Left ventricle myocardium superior (tissue), 1 donor: ENCODE measurements at regions of chr9 and their contacts with region 1.

Region 1: DNA sequence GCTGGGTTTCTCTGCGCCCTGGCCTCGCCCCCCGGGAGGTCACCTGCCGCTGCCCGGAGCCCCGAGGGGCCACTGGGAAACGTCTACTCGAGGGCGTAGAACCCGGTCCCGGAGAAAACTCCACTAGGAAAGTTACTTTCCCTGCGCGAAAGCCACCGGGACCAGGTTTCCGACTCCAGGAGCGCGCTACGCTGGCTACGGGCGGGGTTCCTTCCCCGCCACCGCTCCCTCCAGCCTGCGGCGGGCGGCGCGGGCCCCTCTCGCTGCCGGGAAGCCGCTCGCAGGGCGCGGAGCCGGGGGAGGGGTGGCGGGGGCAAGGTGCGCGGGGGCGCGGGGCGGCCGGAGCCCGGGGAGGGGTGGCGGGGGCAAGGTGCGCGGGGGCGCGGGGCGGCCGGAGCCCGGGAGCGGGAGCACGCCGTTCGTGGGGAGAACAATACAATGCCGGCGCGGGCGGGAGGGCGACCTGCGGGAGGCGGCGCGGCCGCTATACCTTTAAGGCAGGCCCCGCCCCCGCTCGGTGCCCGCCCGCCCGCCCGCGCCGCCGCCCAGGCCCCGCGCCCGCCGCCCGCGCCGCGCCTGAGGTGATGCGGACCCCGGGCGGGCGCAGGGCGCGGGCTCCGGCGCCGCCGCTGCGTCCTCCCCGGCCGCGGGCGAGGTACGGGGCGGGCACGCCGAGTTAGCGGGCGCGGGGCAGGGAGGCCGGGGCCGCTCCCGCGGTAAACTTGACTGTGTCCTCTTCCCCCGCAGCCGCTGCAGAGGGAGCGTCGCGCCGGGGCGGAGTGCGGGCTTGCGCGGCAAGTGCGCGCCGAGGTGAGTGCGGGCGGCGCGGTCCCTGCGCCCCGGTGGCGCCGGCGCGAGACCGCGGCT is 278.1 kb downstream of the AOPEP start:
- DNase-seq: peak; percentile 82
- ATAC-seq: peak; percentile 51

Region 2: GRCh38 chr9:94783102-94783664 is 221.5 kb before region 1 on chr9:
- intact Hi-C with region 1: loop called (anchors 5 kb)
- DNase-seq: peak; percentile 59
- ATAC-seq: peak; percentile 77

Region 3: GRCh38 chr9:94875300-94876020 is 129.2 kb before region 1 on chr9:
- intact Hi-C with region 1: no loop called
- DNase-seq: no peak
- ATAC-seq: no peak